ENCODE measurements at regions of chr16 and their contacts with region 1.

Region 1: GRCh38 chr16:30429678-30430427 is at the start of gene DCTPP1:
- DNase-seq: peak; percentile 93 to 97 (median 94)
- ATAC-seq: peak; percentile 97 to 99 (median 98)
- H3K4me3 ChIP-seq: peak within 1 kb of the TSS; percentile 64 to 87 (median 67)
- H3K27ac ChIP-seq: peak within 1 kb of the TSS; percentile 30 to 67 (median 51)
- H3K4me1 ChIP-seq: peaks cover 0 to 12% (median 3%) of the 10 kb centered on the region in 4 donors
- H3K27me3 ChIP-seq: no peaks in the 10 kb centered on the region
- CTCF ChIP-seq: peak; percentile 89 to 94 (median 92)
- POLR2A ChIP-seq: peak; percentile 50
- total RNA-seq, gene DCTPP1: 10.0 to 17.9 (median 13.9) TPM

Region 2: DNA sequence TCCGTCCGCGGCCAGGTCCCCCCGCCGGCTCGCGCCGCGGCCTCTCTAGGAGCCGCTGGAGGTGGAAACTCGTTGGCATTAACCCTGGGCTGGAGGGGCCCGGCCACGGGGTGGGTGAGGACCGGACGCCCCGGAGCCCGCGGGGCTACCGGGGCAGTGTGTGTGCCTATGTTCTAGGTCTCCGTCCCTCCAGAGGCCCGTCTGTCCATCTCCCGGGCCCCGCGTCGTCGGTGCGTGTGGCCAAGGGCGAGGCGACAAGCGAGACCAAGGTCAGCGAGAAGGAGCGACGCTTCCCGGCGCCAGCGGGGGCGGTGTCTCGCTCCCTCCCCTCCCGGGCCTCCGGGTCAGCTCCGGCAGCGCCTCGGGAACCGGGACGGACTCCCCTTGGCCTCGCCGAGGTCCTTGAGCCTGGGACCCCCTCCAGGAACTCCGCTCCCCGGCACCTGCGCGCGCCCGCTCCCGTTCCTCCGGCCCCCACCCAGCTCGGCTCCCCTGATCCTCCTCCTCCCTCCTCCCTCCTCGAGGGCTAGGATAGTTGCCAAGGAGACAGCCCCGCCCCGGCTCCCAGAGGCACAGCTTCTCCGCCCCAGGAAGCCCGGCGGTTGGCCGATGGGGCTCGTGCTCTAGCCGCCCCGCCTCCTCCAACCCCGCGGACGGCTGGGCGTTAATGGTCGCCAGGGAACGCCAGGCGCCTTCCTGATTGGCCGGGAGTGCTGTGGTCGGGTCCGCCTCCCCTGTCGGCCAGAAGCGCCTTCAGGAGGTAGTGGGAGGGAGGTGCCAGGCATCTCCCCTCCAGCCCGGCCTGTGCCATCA is 97.2 kb after region 1 on chr16:
- intact Hi-C with region 1: loop called in 1 of 2 experiments (anchors 10 kb)
- DNase-seq: peak; percentile 99
- ATAC-seq: peak; percentile 90 to 93 (median 90)
- H3K4me3 ChIP-seq: peak overlapping the region; percentile 76 to 89 (median 86)
- H3K27ac ChIP-seq: peak overlapping the region; percentile 83 to 99 (median 96)
- H3K4me1 ChIP-seq: peaks cover 0 to 33% (median 9%) of the 10 kb centered on the region in 4 donors
- H3K27me3 ChIP-seq: no peaks in the 10 kb centered on the region
- CTCF ChIP-seq: peak; percentile 23 to 42 (median 38)
- POLR2A ChIP-seq: peak; percentile 75

Region 3: DNA sequence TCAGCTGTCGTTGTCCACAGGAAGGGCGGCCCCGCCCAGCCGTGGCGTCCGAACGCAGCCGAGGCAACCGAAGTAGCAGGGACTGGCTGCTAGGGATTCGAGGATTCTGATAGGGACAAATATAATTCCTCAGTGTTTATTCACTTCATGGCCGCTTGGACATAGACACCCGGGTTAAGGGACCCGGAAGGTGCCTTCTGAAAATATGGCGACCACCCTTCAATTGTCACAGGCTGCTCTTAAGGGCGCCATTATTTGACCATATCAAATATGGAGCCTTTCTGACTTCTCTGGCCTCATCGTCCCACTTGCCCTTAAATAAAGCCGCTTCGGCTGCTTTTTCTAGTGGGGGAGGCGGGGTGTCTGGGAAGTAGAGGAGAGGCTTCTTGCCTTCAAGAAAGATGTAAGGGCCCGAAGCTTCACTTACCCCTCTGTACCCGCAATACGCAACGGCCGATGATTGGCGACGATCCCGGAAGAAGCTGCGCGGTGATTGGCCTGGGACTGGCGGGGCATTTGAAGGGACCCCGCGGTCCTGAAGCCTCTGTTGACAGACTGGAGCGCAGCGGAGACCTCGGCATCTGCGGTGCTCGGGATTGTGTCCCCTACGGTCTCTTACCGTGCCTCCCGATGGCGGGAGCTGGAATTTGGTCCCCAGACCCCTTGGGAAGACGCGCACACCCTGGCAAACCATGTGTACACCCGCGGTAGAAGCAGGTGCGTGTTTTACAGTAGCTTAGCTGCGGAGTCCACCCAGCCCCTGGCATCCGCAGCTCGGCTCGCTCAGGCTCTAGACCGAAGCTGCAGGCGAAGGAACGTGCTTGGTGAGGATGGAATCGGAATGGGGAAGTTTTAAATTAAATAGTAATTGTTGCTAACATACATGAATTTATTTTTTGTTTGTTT is 142.1 kb after region 1 on chr16 and contains the start of gene ZNF688:
- intact Hi-C with region 1: no loop called
- DNase-seq: peak; percentile 91 to 92 (median 92)
- ATAC-seq: peak; percentile 75 to 87 (median 84)
- H3K4me3 ChIP-seq: peak within 1 kb of the TSS; percentile 64 to 77 (median 72)
- H3K27ac ChIP-seq: peak within 1 kb of the TSS; percentile 89 to 94 (median 91)
- H3K4me1 ChIP-seq: peaks cover 0 to 12% (median under 1%) of the 10 kb centered on the region in 4 donors
- H3K27me3 ChIP-seq: no peaks in the 10 kb centered on the region
- CTCF ChIP-seq: no peak
- POLR2A ChIP-seq: peak; percentile 45
- total RNA-seq, gene ZNF688: 4.0 to 11.5 (median 6.5) TPM

Region 4: DNA sequence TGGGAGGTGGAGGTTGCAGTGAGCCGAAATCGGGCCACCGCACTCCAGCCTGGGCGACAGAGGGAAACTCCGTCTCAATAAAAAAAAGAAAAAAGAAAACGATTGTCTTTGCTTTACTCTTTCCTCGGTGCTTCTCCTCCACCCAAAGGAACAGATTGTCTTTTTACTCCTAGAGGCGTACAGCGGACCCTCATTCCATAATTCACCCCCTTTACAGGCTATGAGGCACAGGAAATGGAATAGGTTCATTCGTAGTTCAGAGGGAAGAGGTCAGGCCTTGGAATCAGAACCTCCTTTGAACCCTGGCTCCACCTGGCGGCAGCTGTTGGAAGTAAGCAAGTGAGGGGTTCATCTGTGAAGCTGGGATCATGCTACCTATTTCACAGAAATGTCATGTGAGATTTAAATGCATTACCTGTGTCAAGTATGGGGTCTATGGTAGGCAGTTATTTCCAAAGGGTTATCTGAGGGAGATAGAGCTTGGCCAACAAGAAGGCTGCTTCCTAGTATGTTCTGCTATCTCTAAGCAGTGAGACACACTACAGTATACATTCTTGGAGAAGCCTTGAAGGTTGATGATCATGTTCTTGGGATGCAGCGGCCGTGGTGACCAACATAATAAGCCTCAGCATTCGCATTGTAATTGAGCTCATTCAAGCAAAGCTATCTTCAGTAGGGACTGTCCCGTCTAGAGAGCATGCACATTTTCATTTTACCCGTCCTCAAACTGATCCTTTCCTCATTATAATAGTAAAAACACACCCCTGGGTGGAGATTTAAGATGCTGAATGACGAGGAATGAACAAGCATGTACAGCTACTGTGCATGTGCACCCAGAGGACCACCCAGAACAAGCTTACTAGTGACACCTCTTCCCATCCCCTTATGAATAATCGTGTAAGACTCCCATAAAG is 199.0 kb after region 1 on chr16:
- intact Hi-C with region 1: loop called in 1 of 2 experiments (anchors 10 kb)
- DNase-seq: peak; percentile 84 to 87 (median 86)
- ATAC-seq: peak; percentile 96 to 99 (median 98)
- H3K4me3 ChIP-seq: no peak overlapping the region
- H3K27ac ChIP-seq: peak overlapping the region in 2 of 3 donors; percentile 50 to 58
- H3K4me1 ChIP-seq: peaks cover 0 to 8% (median 0%) of the 10 kb centered on the region in 4 donors
- H3K27me3 ChIP-seq: no peaks in the 10 kb centered on the region
- CTCF ChIP-seq: peak; percentile 85 to 95 (median 95)
- POLR2A ChIP-seq: no peak